HEK293 (cell line): ENCODE measurements at regions of chr11 and their contacts with region 1.

Region 1: DNA sequence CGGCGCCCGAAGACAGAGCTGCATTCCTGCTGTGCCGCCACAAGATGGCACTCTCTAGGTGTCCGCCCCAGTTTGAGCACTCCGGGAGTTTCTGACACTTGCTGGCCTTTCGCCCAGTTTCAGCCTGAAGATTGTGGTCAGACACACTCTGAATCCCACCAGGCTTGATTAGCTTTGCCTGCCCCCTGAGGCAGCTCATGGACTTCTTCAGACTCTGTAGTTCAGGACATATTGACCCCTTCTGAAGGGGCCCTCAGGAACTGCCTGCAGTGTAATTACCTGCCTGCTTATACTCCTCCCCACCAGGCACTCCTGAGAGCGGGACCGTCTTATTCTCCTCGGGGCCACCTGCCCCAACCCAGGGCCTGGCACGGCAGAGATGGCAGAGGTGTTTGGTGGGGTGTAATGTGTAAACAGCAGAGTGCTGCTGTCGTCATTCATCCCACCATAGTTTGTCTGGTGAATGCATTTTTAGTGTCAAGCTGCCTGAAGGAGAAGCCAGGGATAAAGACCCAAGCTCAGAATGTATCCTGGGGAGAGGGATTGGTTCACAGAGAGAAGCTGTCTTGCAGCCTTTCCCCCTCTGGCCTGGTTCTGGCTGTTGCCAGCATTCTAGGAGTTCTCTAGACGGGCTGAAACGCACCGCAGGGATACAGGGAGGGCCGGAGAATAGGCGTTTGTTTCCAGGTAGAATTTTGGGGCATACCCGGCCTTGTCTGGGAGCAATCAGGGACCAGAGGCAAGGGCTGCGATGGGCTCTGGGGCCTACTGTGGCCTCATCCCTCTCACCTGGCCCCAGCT is 46.4 kb downstream of the EIF3F start:
- H3K4me3 ChIP-seq: no peak overlapping the region
- H3K27ac ChIP-seq: no peak overlapping the region
- H3K4me1 ChIP-seq: no peaks in the 10 kb centered on the region
- CTCF ChIP-seq: peak; percentile 69

Region 2: DNA sequence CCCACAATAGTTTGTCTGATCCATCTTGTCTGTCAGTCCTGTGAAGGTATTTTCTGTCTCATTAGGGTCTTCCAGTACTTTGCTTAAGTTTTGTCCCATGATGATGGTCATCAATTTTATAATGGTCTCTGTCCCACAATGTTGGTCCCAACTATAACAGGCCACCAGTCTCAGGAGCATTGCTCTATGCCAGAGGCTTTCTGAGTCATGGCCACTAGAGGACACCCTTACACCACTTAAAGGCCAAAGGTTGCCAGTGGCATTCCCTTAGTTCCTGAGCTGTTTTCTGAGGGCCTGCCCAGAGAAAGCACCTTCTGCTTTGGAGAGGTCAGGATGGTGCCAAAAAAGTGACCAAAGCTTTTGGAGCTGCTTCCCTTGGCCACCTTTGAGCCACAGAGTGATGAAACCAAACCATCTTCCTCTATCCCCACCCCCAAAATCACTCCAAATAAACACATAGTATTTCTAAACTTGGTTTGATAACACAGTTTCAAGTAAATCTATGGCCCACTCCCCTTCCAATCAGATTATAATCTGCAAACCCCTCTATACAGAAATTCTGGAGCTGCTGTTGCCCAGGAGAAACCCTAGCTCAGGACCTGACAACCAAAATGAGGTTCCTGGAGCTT is 27.0 kb before region 1 on chr11:
- CTCF ChIA-PET with region 1: interaction called, 44 read pairs
- POLR2A ChIA-PET with region 1: no interaction called
- H3K4me3 ChIP-seq: no peak overlapping the region
- H3K27ac ChIP-seq: no peak overlapping the region
- H3K4me1 ChIP-seq: no peaks in the 10 kb centered on the region
- CTCF ChIP-seq: peak; percentile 68

Region 3: GRCh38 chr11:8018484-8019313 is 14.8 kb before region 1 on chr11:
- CTCF ChIA-PET with region 1: interaction called, 41 read pairs
- POLR2A ChIA-PET with region 1: no interaction called
- H3K4me3 ChIP-seq: peak overlapping the region; percentile 61
- H3K27ac ChIP-seq: peak overlapping the region; percentile 48; the same call in 1 of the 2 replicates
- H3K4me1 ChIP-seq: no peaks in the 10 kb centered on the region
- CTCF ChIP-seq: no peak

Region 4: DNA sequence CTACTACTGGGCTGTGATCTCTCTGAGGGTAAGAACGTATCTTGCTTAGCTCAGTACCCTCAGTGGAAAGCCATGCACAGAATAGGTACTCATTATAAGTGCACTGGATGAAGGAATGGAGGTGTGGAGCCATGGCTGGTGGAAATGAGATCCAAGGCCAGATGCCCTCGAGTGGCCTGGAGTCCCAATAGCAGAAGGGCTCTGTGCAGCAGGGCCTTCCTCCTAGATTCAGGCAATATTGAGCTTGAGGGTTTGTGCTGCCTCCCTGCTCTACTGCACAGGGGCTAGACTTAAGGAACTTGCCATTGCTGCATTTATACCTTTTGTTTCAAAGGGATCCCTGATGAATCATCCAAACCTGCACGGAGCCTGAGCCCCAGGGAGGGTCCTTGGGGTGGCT is 13.9 kb after region 1 on chr11:
- CTCF ChIA-PET with region 1: interaction called, 24 read pairs
- POLR2A ChIA-PET with region 1: no interaction called
- H3K4me3 ChIP-seq: no peak overlapping the region
- H3K27ac ChIP-seq: no peak overlapping the region
- H3K4me1 ChIP-seq: no peaks in the 10 kb centered on the region
- CTCF ChIP-seq: no peak

Region 5: DNA sequence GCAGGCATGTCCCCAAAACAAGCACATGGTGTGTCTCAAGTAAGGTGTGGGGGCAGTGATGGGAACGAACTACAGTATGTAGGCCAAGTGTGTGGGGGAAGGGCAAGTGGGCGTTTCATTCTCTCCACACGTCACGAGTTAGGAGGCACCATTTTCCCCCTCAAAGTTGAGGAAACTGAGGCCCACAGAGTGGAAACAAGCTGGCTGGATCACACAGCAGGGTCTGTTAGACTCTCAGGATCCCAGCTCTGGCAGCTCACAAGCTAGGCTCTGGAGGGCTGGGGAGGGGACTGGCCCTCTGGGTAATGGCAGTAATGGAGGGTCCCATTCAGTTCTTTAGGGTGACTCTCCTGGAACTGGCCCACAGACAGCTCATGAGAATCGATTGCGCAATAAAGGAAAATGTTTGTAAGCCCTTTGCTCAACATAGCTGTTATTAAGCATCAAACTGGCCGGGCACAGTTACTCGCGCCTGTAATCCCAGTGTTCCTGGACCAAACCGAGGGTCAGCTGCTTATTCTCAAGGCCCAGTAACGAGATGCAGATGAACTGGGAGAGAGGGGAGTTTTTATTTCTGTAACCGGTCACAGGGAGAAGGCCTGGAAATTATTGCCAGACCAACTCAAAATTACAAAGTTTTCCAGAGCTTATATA is 23.4 kb after region 1 on chr11:
- CTCF ChIA-PET with region 1: interaction called, 18 read pairs
- POLR2A ChIA-PET with region 1: no interaction called
- H3K4me3 ChIP-seq: no peak overlapping the region
- H3K27ac ChIP-seq: no peak overlapping the region
- H3K4me1 ChIP-seq: no peaks in the 10 kb centered on the region
- CTCF ChIP-seq: no peak

Region 6: GRCh38 chr11:8063324-8063723 is 29.8 kb after region 1 on chr11:
- CTCF ChIA-PET with region 1: interaction called, 25 read pairs
- POLR2A ChIA-PET with region 1: no interaction called
- H3K4me3 ChIP-seq: no peak overlapping the region
- H3K27ac ChIP-seq: no peak overlapping the region
- H3K4me1 ChIP-seq: peaks cover 4% of the 10 kb centered on the region; the same call in 1 of the 2 replicates
- CTCF ChIP-seq: no peak

Region 7: DNA sequence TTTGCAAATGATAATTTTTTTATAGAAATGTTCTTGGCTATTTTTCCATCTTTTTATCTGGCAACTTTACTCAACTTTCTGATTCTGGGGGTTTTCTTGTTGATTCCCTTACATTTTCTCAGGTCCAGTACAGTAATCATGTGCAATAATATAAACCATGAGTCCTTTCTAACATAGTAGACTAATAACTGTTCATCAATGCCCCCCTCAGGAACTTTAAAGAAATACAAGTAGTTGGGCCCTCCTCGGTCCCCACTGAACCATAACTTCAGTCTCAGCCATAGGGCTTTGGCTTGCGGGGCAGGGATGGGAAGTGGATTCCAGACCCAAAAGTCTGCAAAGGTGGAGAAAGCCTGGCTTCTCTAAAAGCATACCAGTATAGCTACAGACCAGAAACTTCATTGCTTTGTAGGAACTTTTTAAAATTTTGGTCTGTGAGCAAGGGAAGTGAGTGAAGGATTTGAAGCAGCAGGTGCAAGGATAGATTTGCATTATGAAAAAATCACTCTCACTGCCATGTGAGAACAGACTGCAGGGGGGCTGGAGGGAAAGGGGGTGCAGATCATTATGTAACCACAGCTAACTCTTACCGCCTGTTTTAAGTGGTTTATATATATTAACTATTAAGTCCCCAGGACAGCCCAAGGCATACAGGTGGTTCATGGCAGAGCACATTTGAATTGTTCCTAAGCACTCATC is 37.1 kb after region 1 on chr11:
- CTCF ChIA-PET with region 1: interaction called, 47 read pairs
- POLR2A ChIA-PET with region 1: no interaction called
- H3K4me3 ChIP-seq: no peak overlapping the region
- H3K27ac ChIP-seq: no peak overlapping the region
- H3K4me1 ChIP-seq: peaks cover 8% of the 10 kb centered on the region
- CTCF ChIP-seq: no peak